Activated B cell treated with CpG ODN at 0.5 μM for 24 hours (primary cell): ENCODE measurements at regions of chr2 and their contacts with region 1.

Region 1: DNA sequence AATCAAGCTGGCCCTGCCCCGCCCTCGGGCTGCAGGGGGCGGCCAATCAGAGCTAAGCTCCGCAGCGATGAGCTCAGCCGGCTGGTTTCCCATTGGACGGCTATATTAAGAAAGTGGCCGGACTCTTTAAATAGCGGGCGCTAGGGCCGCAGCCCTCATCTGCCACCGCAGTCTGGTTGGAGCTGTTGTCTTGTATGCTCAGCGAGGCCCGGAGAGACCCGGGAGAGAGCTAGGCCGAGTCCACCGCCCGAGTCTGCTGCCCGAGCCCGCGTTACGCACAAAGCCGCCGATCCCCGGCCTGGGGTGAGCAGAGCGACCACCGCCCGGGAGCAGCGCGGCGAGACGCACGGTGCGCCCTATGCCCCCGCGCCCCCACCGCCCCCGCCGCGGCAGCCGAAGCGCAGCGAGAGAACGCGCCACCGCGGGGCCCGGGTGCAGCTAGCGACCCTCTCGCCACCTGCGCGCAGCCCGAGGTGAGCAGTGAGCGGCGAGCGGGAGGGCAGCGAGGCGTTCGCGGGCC is at the start of gene RHOB:
- DNase-seq: peak; percentile 87
- ATAC-seq: peak; percentile 96
- H3K4me3 Mint-ChIP-seq: peak within 1 kb of the TSS; percentile 88
- H3K27ac Mint-ChIP-seq: peak within 1 kb of the TSS; percentile 85
- H3K4me1 Mint-ChIP-seq: peaks cover 16% of the 10 kb centered on the region
- H3K27me3 Mint-ChIP-seq: peaks cover 2% of the 10 kb centered on the region
- CTCF ChIP-seq: no peak
- total RNA-seq, gene RHOB: 11.0 and 12.9 TPM in 2 replicates

Region 2: GRCh38 chr2:19901442-19902215 is 545.3 kb before region 1 on chr2 and contains the start of gene TTC32:
- CTCF ChIA-PET with region 1: no interaction called
- POLR2A ChIA-PET with region 1: interaction called, 4 read pairs
- intact Hi-C with region 1: loop called (anchors 1 kb)
- DNase-seq: peak; percentile 91
- ATAC-seq: peak; percentile 91
- H3K4me3 Mint-ChIP-seq: peak within 1 kb of the TSS; percentile 99
- H3K27ac Mint-ChIP-seq: peak within 1 kb of the TSS; percentile 99
- H3K4me1 Mint-ChIP-seq: peaks cover 44% of the 10 kb centered on the region
- H3K27me3 Mint-ChIP-seq: peaks cover 7% of the 10 kb centered on the region
- CTCF ChIP-seq: no peak
- total RNA-seq, gene TTC32: 18.4 and 22.8 TPM in 2 replicates

Region 3: DNA sequence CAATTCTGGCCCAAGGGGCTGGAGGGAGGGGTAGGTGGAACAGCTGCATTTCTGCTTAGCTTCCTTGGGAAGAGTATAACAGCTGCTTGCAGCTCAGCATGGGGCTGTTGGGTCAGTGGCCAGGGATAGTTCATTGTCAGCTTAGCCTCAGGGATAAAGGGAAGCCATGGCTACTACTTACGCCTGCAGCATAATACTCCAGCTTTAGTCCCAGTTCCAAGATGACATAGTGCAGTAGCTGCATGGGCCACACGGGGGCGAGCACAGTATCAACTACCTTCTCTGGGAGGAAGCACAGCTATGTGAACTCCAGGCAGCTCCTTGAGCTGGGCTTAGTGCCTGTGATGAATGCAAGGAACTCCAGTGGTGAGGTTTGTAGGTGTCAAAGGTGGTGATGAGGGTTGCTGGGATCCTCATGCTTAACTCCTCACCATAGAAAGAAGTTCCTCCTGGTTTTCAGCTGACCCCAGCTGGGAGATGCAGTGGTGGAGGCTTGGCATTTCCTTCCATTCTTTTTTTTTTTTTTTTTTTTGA is 35.5 kb before region 1 on chr2:
- CTCF ChIA-PET with region 1: interaction called, 16 read pairs
- POLR2A ChIA-PET with region 1: interaction called, 11 read pairs
- intact Hi-C with region 1: loop called (anchors 1 kb)
- DNase-seq: peak; percentile 54
- ATAC-seq: peak; percentile 100
- H3K4me3 Mint-ChIP-seq: no peak overlapping the region
- H3K27ac Mint-ChIP-seq: no peak overlapping the region
- H3K4me1 Mint-ChIP-seq: no peaks in the 10 kb centered on the region
- H3K27me3 Mint-ChIP-seq: peaks cover 12% of the 10 kb centered on the region
- CTCF ChIP-seq: no peak

Region 4: GRCh38 chr2:20578895-20579825 is 132.2 kb after region 1 on chr2:
- CTCF ChIA-PET with region 1: no interaction called
- POLR2A ChIA-PET with region 1: interaction called, 14 read pairs
- intact Hi-C with region 1: loop called (anchors 5 kb)
- DNase-seq: no peak
- ATAC-seq: no peak
- H3K4me3 Mint-ChIP-seq: no peak overlapping the region
- H3K27ac Mint-ChIP-seq: no peak overlapping the region
- H3K4me1 Mint-ChIP-seq: peaks cover 31% of the 10 kb centered on the region
- H3K27me3 Mint-ChIP-seq: no peaks in the 10 kb centered on the region
- CTCF ChIP-seq: no peak

Region 5: DNA sequence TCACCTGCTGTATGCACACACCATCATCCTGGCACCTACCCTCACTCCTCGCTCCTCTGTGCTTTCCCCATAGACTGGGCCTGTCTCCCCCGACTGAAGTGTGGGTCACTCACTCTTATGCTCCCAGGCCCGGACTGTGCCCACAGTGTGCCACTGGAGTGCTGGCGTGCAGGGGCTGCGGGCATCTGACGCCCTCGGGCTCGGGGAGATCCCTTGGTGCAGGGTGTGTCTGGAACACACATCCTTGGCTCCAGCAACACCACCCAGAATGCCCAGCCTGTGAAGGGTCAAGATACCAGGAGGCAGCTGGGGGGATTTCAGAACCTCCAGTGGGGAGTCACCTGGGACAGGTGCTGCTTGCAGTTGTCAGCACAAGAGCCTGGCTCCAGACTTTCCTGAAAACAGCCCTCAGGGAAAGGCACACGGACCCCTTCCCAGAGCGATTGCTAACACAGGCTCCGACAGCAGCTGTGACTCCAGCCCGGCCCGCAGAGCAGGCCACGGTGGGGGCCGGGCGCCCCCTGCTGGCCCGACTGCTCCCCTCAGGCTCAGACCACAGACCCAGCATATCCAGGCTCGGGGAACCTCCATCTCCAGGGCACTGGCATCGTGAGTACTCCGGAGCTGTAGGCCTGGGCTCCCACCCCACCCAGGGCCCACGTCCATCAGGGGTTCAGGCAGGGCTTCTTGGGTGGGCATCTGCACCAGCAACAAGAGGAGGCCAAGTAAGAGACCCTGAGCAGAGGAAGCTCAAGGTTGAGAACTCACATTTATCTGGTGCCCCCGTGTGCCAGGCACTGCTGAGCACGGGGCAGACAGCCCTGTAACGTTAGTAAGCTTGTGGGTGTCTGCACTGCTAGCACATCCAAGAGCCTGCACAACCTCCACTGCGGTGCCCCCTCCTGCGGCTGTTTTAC is 195.3 kb after region 1 on chr2:
- CTCF ChIA-PET with region 1: interaction called, 57 read pairs
- POLR2A ChIA-PET with region 1: interaction called, 16 read pairs
- intact Hi-C with region 1: loop called (anchors 1 kb)
- DNase-seq: peak; percentile 73
- ATAC-seq: peak; percentile 100
- H3K4me3 Mint-ChIP-seq: no peak overlapping the region
- H3K27ac Mint-ChIP-seq: no peak overlapping the region
- H3K4me1 Mint-ChIP-seq: peaks cover 5% of the 10 kb centered on the region
- H3K27me3 Mint-ChIP-seq: no peaks in the 10 kb centered on the region
- CTCF ChIP-seq: peak; percentile 55

Region 6: GRCh38 chr2:20822535-20823490 is 375.8 kb after region 1 on chr2 and contains the start of gene LDAH:
- CTCF ChIA-PET with region 1: no interaction called
- POLR2A ChIA-PET with region 1: interaction called, 18 read pairs
- intact Hi-C with region 1: loop called (anchors 2 kb)
- DNase-seq: peak; percentile 84
- ATAC-seq: peak; percentile 83
- H3K4me3 Mint-ChIP-seq: peak within 1 kb of the TSS; percentile 97
- H3K27ac Mint-ChIP-seq: peak within 1 kb of the TSS; percentile 97
- H3K4me1 Mint-ChIP-seq: peaks cover 21% of the 10 kb centered on the region
- H3K27me3 Mint-ChIP-seq: no peaks in the 10 kb centered on the region
- CTCF ChIP-seq: no peak
- total RNA-seq, gene LDAH: 31.2 and 31.7 TPM in 2 replicates